WTC11 (cell line): ENCODE measurements at regions of chr16 and their contacts with region 1.

Region 1: DNA sequence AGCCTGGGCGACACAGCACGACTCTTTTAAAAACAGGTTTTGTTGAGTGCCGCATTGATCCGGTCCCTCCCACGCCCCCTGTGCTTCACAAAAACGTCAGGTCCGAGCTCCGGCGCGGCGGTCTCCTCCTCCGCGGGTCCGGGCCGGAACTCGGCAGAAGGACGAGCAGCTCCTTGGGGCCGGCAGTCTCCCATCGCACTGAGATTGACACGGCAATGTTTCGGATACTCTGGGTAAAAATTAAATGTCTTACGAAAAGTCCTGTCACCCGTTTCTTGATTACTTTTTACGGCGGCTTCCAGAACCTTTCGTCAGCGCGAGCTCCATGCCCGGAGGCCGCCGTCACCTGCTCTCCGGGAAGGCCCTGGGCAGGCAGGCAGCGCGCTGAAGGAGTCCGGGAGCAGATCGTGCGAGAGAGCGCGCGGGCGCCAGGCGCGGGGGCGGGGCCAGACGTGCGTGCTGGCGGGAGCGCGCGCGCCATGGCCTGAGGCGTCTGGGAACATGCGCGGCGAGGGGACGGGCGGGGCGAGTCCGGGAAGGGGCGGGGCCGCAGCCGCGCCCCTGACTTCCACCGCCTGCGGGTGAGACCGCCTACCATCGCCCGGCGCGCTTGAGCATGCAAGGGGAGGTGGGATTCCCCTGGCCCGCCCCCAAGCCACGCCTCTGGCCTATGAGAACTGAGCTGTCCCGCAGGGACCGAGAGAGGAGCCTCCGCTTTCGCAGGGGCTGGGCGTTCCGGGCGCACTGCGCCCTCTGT is 11.7 kb upstream of the SRL start:
- DNase-seq: peak; percentile 100
- ATAC-seq: peak; percentile 97
- H3K4me3 Mint-ChIP-seq: peak overlapping the region; percentile 87
- H3K27ac Mint-ChIP-seq: peak overlapping the region; percentile 96
- H3K4me1 Mint-ChIP-seq: peaks cover 8% of the 10 kb centered on the region; the same call in 1 of the 2 replicates
- H3K27me3 Mint-ChIP-seq: no peaks in the 10 kb centered on the region
- CTCF ChIP-seq: no peak

Region 2: DNA sequence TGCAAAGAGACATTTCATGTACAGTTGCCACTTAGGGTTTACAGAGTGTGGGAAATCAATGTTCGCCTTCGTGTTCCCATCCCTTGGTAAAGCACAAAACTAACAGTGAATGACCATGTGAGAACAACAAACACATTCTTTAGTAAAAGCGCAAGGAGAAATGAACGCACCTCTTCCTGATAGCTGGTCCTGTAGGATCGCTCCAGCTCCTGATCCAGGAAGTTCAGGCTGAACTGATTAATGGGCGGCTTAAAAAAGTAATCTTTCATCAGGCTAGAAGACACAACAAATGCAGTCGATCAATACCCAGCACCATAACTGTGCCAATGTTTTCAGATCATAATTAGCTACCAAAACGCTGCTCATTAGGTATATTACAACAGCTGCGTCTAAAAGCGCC is 264.7 kb before region 1 on chr16:
- CTCF ChIA-PET with region 1: interaction called, 56 read pairs
- POLR2A ChIA-PET with region 1: no interaction called
- DNase-seq: no peak
- ATAC-seq: no peak
- H3K4me3 Mint-ChIP-seq: no peak overlapping the region
- H3K27ac Mint-ChIP-seq: no peak overlapping the region
- H3K4me1 Mint-ChIP-seq: no peaks in the 10 kb centered on the region
- H3K27me3 Mint-ChIP-seq: peaks cover 2% of the 10 kb centered on the region
- CTCF ChIP-seq: no peak

Region 3: DNA sequence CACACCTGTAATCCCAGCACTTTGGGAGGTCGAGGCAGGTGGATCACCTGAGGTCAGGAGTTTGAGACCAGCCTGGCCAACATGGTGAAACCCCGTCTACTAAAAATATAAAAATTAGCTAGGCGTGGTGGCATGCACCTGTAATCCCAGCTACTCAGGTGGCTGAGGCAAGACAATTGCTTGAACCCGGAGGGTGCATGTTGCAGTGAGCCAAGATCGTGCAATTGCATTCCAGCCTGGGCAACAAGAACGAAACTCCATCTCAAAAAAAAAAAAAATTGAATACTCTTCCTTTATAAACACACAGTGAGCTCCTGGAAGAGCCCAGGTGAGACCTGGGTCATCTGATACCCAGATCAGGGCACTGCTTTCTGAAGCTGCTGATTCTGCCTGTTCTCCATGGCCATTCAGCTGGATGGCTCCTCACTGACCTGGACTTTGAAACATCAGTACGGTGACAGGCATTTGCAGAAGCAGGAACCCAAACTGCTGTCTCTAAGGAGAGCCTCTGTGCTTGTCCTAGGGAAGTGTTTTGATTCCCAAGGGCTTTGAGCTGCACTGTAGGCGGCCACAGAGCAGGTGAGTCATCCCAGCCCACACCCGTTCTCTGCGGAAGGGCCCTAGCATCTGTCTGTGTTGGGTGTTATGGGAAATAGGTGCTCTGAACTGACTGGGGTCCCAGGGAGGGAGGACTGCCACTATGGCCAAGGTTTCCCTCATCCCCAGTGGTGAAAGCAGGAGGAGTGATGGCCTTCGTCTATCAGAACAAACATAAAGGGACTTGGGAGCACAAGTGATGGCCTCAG is 76.8 kb before region 1 on chr16:
- CTCF ChIA-PET with region 1: interaction called, 35 read pairs
- POLR2A ChIA-PET with region 1: no interaction called
- DNase-seq: no peak
- ATAC-seq: no peak
- H3K4me3 Mint-ChIP-seq: no peak overlapping the region
- H3K27ac Mint-ChIP-seq: no peak overlapping the region
- H3K4me1 Mint-ChIP-seq: no peaks in the 10 kb centered on the region; the same call in 1 of the 2 replicates
- H3K27me3 Mint-ChIP-seq: no peaks in the 10 kb centered on the region
- CTCF ChIP-seq: no peak

Region 4: DNA sequence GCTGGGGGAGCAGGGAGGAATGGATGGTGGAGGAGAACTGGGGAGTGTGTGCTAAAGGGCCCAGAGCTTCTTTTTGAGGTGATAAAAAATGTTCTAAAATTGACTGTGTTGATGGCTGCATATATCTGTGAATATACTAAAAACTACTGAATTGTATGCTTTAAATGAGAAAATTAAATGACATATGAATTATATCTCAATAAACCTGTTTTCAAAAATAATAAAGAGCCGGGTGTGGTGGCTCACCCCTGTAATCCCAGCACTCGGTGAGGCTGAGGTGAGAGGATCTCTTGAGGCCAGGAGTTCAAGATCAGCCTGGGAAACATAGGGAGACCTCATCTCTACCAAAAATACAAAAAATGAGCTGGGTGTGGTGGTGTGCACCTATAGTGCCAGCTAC is 28.5 kb before region 1 on chr16:
- CTCF ChIA-PET with region 1: interaction called, 37 read pairs
- POLR2A ChIA-PET with region 1: no interaction called
- DNase-seq: no peak
- ATAC-seq: no peak
- H3K4me3 Mint-ChIP-seq: no peak overlapping the region
- H3K27ac Mint-ChIP-seq: no peak overlapping the region
- H3K4me1 Mint-ChIP-seq: no peaks in the 10 kb centered on the region
- H3K27me3 Mint-ChIP-seq: no peaks in the 10 kb centered on the region
- CTCF ChIP-seq: no peak

Region 5: GRCh38 chr16:4293822-4294457 is 40.4 kb after region 1 on chr16:
- CTCF ChIA-PET with region 1: interaction called, 18 read pairs
- POLR2A ChIA-PET with region 1: interaction called, 3 read pairs
- DNase-seq: peak; percentile 81
- ATAC-seq: peak; percentile 91
- H3K4me3 Mint-ChIP-seq: peak overlapping the region; percentile 59
- H3K27ac Mint-ChIP-seq: peak overlapping the region; percentile 97
- H3K4me1 Mint-ChIP-seq: peaks cover 37% of the 10 kb centered on the region
- H3K27me3 Mint-ChIP-seq: no peaks in the 10 kb centered on the region
- CTCF ChIP-seq: no peak

Region 6: DNA sequence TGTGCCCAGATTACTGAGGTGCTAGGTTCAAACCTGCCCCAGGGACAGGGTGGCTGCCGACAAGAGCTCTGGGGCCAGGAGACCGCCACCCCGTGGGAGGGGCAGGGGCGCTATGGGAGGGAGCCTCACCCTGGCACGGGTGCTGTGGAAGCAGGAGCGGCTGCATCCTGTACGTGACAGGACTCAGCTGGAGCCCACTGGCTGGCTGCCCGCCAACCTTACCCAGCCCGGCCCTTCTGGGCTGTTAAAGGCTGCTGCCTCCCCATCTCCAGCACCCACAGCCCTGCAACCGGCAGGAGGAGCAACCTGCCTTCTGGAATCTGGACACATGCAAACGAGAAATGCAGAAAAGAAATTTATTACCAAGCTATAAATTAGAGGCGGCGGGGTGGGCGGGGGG is 86.3 kb after region 1 on chr16:
- CTCF ChIA-PET with region 1: interaction called, 12 read pairs
- POLR2A ChIA-PET with region 1: no interaction called
- DNase-seq: no peak
- ATAC-seq: no peak
- H3K4me3 Mint-ChIP-seq: no peak overlapping the region
- H3K27ac Mint-ChIP-seq: no peak overlapping the region
- H3K4me1 Mint-ChIP-seq: no peaks in the 10 kb centered on the region
- H3K27me3 Mint-ChIP-seq: no peaks in the 10 kb centered on the region; the same call in 1 of the 2 replicates
- CTCF ChIP-seq: no peak

Region 7: GRCh38 chr16:4402439-4403132 is 149.0 kb after region 1 on chr16:
- CTCF ChIA-PET with region 1: interaction called, 33 read pairs
- POLR2A ChIA-PET with region 1: no interaction called
- DNase-seq: peak; percentile 94
- ATAC-seq: peak; percentile 77
- H3K4me3 Mint-ChIP-seq: peak overlapping the region; percentile 30
- H3K27ac Mint-ChIP-seq: no peak overlapping the region
- H3K4me1 Mint-ChIP-seq: peaks cover 6% of the 10 kb centered on the region
- H3K27me3 Mint-ChIP-seq: no peaks in the 10 kb centered on the region
- CTCF ChIP-seq: peak; percentile 97